ENCODE measurements at regions of chr1 and their contacts with region 1.

Region 1: DNA sequence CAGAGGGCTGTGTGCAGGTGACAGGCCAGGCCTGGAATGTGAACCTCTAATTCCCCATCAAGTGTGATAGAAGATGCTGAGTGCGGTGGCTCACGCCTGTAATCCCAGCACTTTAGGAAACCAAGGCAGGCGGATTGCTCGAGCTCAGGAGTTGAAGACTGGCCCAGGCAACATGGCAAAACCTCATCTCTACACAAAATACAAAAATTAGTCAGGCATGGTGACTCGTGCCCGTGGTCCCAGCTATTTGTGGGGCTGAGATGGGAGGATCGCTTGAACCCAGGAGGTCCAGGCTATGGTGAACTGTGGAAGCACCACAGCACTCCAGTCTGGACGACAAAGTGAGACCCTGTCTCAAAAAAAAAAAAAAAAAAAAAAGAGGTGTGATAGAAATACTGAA is 40.1 kb upstream of the PUM1 start:
- DNase-seq: no peak
- H3K4me3 ChIP-seq: no peak overlapping the region
- H3K27ac ChIP-seq: no peak overlapping the region
- H3K4me1 ChIP-seq: no peaks in the 10 kb centered on the region
- H3K27me3 ChIP-seq: no peaks in the 10 kb centered on the region
- CTCF ChIP-seq: no peak
- POLR2A ChIP-seq: no peak

Region 2: GRCh38 chr1:31166462-31166861 is 60.8 kb after region 1 on chr1:
- intact Hi-C with region 1: loop called (anchors 2 kb)
- DNase-seq: no peak
- H3K4me3 ChIP-seq: no peak overlapping the region
- H3K27ac ChIP-seq: no peak overlapping the region
- H3K4me1 ChIP-seq: no peaks in the 10 kb centered on the region
- H3K27me3 ChIP-seq: no peaks in the 10 kb centered on the region
- CTCF ChIP-seq: no peak
- POLR2A ChIP-seq: no peak